ENCODE measurements at regions of chr11 and their contacts with region 1.

Region 1: GRCh38 chr11:57116654-57117053 is 65.1 kb upstream of the LRRC55 start:
- DNase-seq: peak; percentile 42 to 78 (median 58)
- ATAC-seq: peak; percentile 95
- H3K4me3 ChIP-seq: no peak overlapping the region
- H3K27ac ChIP-seq: no peak overlapping the region
- H3K4me1 ChIP-seq: peaks cover 0 to 3% of the 10 kb centered on the region in 2 experiments; a peak in 2 of 5 replicates
- H3K27me3 ChIP-seq: no peaks in the 10 kb centered on the region
- CTCF ChIP-seq: peak; percentile 80 to 85 (median 80)
- EP300 ChIP-seq: no peak
- POLR2A ChIP-seq: no peak
- RAD21 ChIP-seq: peak; percentile 87 to 93

Region 2: DNA sequence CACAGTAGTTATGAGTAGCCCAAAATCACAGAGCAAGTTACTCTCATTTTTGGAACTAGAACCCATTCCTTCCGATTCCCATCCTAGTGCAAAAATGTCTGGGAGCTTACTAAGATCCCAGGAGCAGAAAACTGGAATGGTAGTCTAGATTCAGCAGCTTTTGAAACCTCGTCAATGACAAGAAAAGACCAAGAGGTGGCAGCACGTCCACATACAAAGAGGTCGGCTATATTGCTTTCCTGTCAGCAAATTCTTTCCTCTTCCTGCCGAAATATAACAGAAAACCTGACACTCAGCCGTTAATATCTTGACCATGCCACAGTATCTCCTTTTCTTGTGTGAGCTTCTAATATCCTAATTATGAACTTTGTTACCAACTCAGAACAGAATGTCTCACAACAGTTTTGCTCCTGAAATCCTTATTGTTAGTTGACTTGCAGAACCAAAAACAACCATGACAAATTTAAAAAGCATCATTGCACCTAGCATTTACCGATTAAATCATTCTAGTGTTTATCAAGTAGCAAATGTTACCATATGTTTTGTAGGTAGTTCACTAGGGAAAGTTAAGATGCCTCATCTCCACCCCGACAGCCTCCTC is 275.3 kb before region 1 on chr11:
- CTCF ChIA-PET with region 1: no interaction called
- POLR2A ChIA-PET with region 1: no interaction called
- in situ Hi-C with region 1: loop called (anchors 10 kb)
- intact Hi-C with region 1: loop called (anchors 1 kb)
- DNase-seq: peak; percentile 38 to 61 (median 52)
- ATAC-seq: peak; percentile 68
- H3K4me3 ChIP-seq: no peak overlapping the region
- H3K27ac ChIP-seq: no peak overlapping the region
- H3K4me1 ChIP-seq: no peaks in the 10 kb centered on the region
- H3K27me3 ChIP-seq: no peaks in the 10 kb centered on the region
- CTCF ChIP-seq: peak; percentile 56 to 71 (median 62)
- EP300 ChIP-seq: no peak
- POLR2A ChIP-seq: no peak
- RAD21 ChIP-seq: peak; percentile 74

Region 3: GRCh38 chr11:57001674-57002401 is 114.8 kb before region 1 on chr11:
- CTCF ChIA-PET with region 1: no interaction called
- POLR2A ChIA-PET with region 1: no interaction called
- in situ Hi-C with region 1: no loop called
- intact Hi-C with region 1: loop called (anchors 5 kb)
- DNase-seq: peak; percentile 28 to 41 (median 32)
- ATAC-seq: peak; percentile 88
- H3K4me3 ChIP-seq: no peak overlapping the region
- H3K27ac ChIP-seq: no peak overlapping the region
- H3K4me1 ChIP-seq: no peaks in the 10 kb centered on the region
- H3K27me3 ChIP-seq: no peaks in the 10 kb centered on the region
- CTCF ChIP-seq: peak; percentile 45 to 61 (median 55); a peak in 5 of 6 replicates
- EP300 ChIP-seq: no peak
- POLR2A ChIP-seq: no peak
- RAD21 ChIP-seq: peak in 1 of 2 experiments; percentile 39; a peak in 2 of 4 replicates

Region 4: GRCh38 chr11:57131080-57131790 is 14.6 kb after region 1 on chr11:
- CTCF ChIA-PET with region 1: interaction called, 6 read pairs
- POLR2A ChIA-PET with region 1: no interaction called
- in situ Hi-C with region 1: no loop called
- intact Hi-C with region 1: loop called (anchors 1 kb)
- DNase-seq: peak; percentile 24 to 68 (median 32)
- ATAC-seq: peak; percentile 81
- H3K4me3 ChIP-seq: no peak overlapping the region
- H3K27ac ChIP-seq: no peak overlapping the region
- H3K4me1 ChIP-seq: peaks cover 0 to 16% of the 10 kb centered on the region in 2 experiments; a peak in 3 of 5 replicates
- H3K27me3 ChIP-seq: no peaks in the 10 kb centered on the region
- CTCF ChIP-seq: peak; percentile 80 to 87 (median 87)
- EP300 ChIP-seq: no peak
- POLR2A ChIP-seq: no peak
- RAD21 ChIP-seq: peak; percentile 92